ENCODE measurements at regions of chr10 and their contacts with region 1.

Region 1: DNA sequence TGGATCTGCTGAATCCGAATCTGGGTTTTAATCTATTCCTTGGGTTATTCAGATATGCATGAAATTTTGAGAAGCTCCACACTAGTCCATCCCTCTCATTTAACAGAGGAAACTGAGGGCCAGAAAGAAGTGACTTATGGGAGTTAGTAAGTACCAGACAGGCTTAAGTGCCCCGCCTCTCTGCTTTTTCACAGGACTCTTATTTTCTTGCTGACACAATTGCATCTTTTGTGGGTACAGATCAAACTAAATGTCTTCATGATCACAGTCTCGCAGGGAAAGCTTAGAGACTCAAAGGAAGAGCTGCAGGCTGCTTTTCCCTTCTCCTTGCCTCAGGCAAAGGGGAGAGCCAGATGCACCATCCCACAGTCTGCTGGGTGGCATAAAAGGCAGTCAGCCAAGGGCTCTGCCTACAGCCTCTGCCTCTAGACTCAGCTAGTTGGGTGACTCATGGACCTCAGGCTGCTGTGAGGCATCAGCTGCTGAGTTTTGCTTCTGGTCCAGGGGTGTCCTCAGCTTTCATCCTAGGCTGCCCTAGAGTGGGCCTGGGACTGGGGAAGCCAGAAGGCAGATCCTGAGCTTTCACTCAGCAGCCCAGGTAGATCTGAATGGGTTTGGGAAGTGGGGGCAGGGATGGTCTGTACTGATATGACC is 11.6 kb downstream of the GOLGA7B start:
- DNase-seq: no peak
- ATAC-seq: peak; percentile 48
- H3K4me3 Mint-ChIP-seq: no peak overlapping the region
- H3K27ac Mint-ChIP-seq: no peak overlapping the region
- H3K4me1 Mint-ChIP-seq: peaks cover 26% of the 10 kb centered on the region
- H3K27me3 Mint-ChIP-seq: no peaks in the 10 kb centered on the region; the same call in 1 of the 2 replicates
- CTCF ChIP-seq: no peak

Region 2: DNA sequence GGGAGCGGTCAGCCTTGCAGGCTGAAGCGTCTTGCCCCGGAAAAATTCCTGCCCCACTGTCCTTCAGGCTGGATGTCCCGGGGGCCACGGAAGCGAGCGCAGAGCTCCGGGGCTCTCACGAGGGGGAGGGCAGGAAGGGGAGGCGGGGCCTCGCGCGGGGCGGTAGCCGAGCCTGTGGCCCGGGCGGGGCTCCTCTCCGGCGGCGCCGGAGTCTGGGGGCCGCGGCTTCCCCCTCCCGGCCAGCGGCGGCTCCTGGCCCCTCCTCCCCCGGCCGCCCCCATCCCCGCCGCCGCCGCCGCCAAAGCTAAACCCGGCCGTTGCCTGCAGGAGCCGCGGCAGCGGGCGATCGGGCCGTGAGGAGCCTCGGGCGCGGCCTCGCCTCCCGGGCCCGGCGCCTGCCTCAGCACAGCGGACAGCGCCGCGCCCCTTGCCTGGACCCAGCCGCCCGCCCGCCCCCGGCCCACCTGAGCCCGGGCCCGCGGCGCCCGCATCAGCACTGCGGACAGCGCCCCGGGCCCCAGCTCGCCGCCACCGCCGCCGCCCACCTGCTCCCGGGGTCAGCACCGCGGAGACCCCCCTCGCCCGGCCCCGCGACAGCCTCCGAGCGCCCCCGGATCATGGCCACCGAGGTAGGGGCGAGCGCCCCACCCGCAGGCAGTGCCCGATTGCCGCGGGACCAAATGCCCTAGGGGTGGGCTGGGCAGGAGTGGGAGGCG is 11.4 kb before region 1 on chr10 and contains the start of gene GOLGA7B:
- CTCF ChIA-PET with region 1: interaction called, 10 read pairs
- POLR2A ChIA-PET with region 1: no interaction called
- DNase-seq: peak; percentile 75
- ATAC-seq: peak; percentile 95
- H3K4me3 Mint-ChIP-seq: peak within 1 kb of the TSS; percentile 73
- H3K27ac Mint-ChIP-seq: no peak within 1 kb of the TSS
- H3K4me1 Mint-ChIP-seq: peaks cover 14% of the 10 kb centered on the region
- H3K27me3 Mint-ChIP-seq: peaks cover 37% of the 10 kb centered on the region
- CTCF ChIP-seq: no peak
- total RNA-seq, gene GOLGA7B: 0.07 to 0.24 TPM (median 0.07 TPM) in 3 replicates

Region 3: DNA sequence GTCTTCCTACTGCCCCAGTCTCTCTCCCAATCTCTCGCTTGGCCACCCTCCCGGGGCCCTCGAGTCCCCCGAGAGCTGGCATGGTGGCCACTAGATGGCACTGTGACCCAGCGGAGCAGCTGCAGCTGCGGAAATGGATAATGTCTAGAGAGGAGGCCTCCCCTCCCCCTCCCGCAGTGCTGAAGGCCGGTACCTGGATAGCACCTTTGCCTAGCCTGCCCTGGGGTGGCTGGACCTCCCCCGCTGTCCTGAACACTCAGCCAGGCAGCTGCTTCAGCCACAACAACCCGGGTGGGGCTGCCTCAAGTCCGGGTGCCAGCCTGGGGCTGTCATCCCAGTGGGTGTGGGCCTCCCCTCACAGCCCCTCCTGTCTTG is 53.6 kb after region 1 on chr10:
- CTCF ChIA-PET with region 1: no interaction called
- POLR2A ChIA-PET with region 1: no interaction called
- DNase-seq: peak; percentile 93
- ATAC-seq: peak; percentile 95
- H3K4me3 Mint-ChIP-seq: no peak overlapping the region
- H3K27ac Mint-ChIP-seq: no peak overlapping the region
- H3K4me1 Mint-ChIP-seq: peaks cover 8% of the 10 kb centered on the region
- H3K27me3 Mint-ChIP-seq: peaks cover 23% of the 10 kb centered on the region
- CTCF ChIP-seq: peak; percentile 86